Activated T-helper 2 cell treated with anti-CD3 and anti-CD28 coated beads, Interferon-gamma antibody, Interleukin-2, Interleukin-4, amounts not matched to agents 10 μg/mL and 5 μg/mL and 100 μg/mL, durations not matched to agents 14 hours and 24 hours and 36 hours (primary cell): ENCODE measurements at regions of chr3 and their contacts with region 1.

Region 1: GRCh38 chr3:187025656-187026316 is 95.5 kb downstream of the ST6GAL1 start:
- DNase-seq: no peak
- H3K4me3 Mint-ChIP-seq: peak overlapping the region; percentile 77
- H3K27ac Mint-ChIP-seq: peak overlapping the region; percentile 89
- H3K4me1 Mint-ChIP-seq: peaks cover 51% of the 10 kb centered on the region
- H3K27me3 Mint-ChIP-seq: no peaks in the 10 kb centered on the region

Region 2: DNA sequence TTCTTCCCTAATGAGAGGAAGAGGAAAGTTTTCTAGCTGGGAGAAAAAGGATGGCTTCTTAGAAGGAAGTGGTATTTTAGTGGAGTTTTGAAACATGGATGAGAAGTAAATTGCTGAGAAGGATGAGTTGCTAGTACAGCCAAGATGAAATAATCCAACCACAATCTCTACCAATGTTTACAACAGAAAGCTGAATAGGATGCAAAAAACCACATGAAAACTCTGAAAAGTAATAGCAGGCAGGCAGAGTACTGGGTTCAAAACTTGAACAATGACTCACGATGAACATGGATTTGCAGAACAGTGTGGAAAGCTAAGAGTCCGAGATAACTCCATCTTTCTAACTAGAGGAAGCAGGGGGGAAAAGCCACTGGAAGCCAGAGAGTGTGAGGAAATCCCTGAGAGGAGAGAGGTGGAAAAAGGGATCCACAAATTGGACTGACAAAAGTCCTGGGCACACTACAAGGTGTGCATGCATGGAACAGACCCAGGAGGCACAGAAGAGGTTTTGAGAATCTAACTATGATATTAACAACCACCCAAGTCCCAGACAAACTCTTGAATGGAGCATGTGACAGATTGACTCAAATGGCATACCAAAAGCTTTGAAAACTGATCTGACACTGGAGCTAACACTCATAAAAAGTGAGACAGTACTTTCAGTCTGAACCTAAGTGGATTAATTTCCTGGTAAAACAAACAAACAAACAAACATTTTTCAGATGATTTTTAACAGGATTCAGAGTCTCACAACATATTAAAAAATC is 18.7 kb before region 1 on chr3:
- intact Hi-C with region 1: loop called (anchors 2 kb)
- DNase-seq: no peak
- H3K4me3 Mint-ChIP-seq: no peak overlapping the region
- H3K27ac Mint-ChIP-seq: peak overlapping the region; percentile 42
- H3K4me1 Mint-ChIP-seq: peaks cover 58% of the 10 kb centered on the region
- H3K27me3 Mint-ChIP-seq: no peaks in the 10 kb centered on the region

Region 3: DNA sequence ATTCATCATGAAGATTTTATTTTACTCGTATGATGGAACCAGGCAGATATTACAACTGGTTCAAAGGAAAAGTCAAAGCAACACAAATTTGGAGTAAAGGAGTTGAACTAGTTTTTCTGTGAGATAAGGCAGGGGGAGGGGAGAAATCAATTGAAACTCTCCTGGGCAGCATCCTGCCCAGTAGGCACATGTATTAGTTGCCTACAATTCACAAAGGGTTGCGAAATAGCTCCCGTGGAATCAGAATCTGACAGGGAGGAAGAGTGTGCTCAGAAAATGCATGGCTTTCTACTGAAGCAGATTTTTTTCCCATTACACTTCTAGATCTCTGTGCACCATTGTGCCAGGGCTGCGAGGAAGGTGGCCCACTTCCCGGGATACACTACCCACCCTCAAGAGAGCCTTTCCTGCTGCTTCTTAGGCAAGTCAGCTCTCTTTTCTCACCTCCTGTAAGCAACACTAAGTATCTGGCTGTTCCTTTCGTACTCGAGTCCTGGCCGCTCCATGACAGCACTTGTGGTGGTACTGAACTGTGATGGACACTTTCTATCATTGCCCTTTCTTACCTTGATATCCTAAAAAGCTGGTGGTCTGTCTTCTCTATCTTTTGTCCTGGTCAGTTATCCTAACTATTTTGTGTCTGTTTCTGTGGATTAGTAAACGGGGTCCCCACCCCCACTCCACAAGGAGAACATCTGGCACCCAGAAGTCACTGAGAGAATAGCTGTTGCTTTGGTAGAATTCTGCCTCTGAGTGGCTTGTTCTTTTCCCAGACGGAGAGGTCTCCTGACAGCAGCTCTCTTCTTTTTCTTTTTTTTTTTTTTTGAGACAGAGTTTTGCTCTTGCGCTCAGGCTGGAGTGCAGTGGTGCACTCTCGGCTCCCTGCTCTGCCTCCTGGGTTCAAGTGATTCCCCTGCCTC is 38.7 kb after region 1 on chr3:
- intact Hi-C with region 1: loop called (anchors 5 kb)
- DNase-seq: no peak
- H3K4me3 Mint-ChIP-seq: no peak overlapping the region
- H3K27ac Mint-ChIP-seq: peak overlapping the region; percentile 70
- H3K4me1 Mint-ChIP-seq: peaks cover 52% of the 10 kb centered on the region
- H3K27me3 Mint-ChIP-seq: no peaks in the 10 kb centered on the region